Activated T-helper 2 cell treated with anti-CD3 and anti-CD28 coated beads, Interferon-gamma antibody, Interleukin-2, Interleukin-4, amounts not matched to agents 10 μg/mL and 5 μg/mL and 100 μg/mL, durations not matched to agents 14 hours and 24 hours and 36 hours (primary cell): ENCODE measurements at regions of chr15 and their contacts with region 1.

Region 1: GRCh38 chr15:44735482-44736180 is 697 bp upstream of the TRIM69 start:
- DNase-seq: no peak
- H3K4me3 Mint-ChIP-seq: peak overlapping the region; percentile 80
- H3K27ac Mint-ChIP-seq: peak overlapping the region; percentile 96
- H3K4me1 Mint-ChIP-seq: peaks cover 58% of the 10 kb centered on the region
- H3K27me3 Mint-ChIP-seq: no peaks in the 10 kb centered on the region

Region 2: GRCh38 chr15:44381236-44381635 is 354.4 kb before region 1 on chr15:
- intact Hi-C with region 1: no loop called
- DNase-seq: no peak
- H3K4me3 Mint-ChIP-seq: no peak overlapping the region
- H3K27ac Mint-ChIP-seq: no peak overlapping the region
- H3K4me1 Mint-ChIP-seq: peaks cover 12% of the 10 kb centered on the region
- H3K27me3 Mint-ChIP-seq: no peaks in the 10 kb centered on the region

Region 3: GRCh38 chr15:44593042-44593736 is 142.4 kb before region 1 on chr15:
- intact Hi-C with region 1: loop called (anchors 2 kb)
- DNase-seq: no peak
- H3K4me3 Mint-ChIP-seq: no peak overlapping the region
- H3K27ac Mint-ChIP-seq: peak overlapping the region; percentile 46
- H3K4me1 Mint-ChIP-seq: peaks cover 17% of the 10 kb centered on the region
- H3K27me3 Mint-ChIP-seq: no peaks in the 10 kb centered on the region

Region 4: GRCh38 chr15:44663409-44664308 is 72.0 kb before region 1 on chr15 and contains the start of gene SPG11:
- intact Hi-C with region 1: loop called (anchors 2 kb)
- DNase-seq: peak; percentile 96
- H3K4me3 Mint-ChIP-seq: peak within 1 kb of the TSS; percentile 90
- H3K27ac Mint-ChIP-seq: peak within 1 kb of the TSS; percentile 98
- H3K4me1 Mint-ChIP-seq: peaks cover 49% of the 10 kb centered on the region
- H3K27me3 Mint-ChIP-seq: no peaks in the 10 kb centered on the region
- total RNA-seq, gene SPG11: 71.2 and 75.8 TPM in 2 replicates

Region 5: GRCh38 chr15:44694416-44694815 is 41.2 kb before region 1 on chr15:
- intact Hi-C with region 1: no loop called
- DNase-seq: no peak
- H3K4me3 Mint-ChIP-seq: no peak overlapping the region
- H3K27ac Mint-ChIP-seq: no peak overlapping the region
- H3K4me1 Mint-ChIP-seq: peaks cover 11% of the 10 kb centered on the region
- H3K27me3 Mint-ChIP-seq: peaks cover 10% of the 10 kb centered on the region

Region 6: DNA sequence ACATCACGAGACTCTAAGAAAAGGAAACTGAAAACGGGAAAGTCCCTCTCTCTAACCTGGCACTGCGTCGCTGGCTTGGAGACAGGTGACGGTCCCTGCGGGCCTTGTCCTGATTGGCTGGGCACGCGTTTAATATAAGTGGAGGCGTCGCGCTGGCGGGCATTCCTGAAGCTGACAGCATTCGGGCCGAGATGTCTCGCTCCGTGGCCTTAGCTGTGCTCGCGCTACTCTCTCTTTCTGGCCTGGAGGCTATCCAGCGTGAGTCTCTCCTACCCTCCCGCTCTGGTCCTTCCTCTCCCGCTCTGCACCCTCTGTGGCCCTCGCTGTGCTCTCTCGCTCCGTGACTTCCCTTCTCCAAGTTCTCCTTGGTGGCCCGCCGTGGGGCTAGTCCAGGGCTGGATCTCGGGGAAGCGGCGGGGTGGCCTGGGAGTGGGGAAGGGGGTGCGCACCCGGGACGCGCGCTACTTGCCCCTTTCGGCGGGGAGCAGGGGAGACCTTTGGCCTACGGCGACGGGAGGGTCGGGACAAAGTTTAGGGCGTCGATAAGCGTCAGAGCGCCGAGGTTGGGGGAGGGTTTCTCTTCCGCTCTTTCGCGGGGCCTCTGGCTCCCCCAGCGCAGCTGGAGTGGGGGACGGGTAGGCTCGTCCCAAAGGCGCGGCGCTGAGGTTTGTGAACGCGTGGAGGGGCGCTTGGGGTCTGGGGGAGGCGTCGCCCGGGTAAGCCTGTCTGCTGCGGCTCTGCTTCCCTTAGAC is 24.1 kb before region 1 on chr15 and contains the start of gene B2M:
- intact Hi-C with region 1: loop called (anchors 2 kb)
- DNase-seq: peak; percentile 95
- H3K4me3 Mint-ChIP-seq: peak within 1 kb of the TSS; percentile 98
- H3K27ac Mint-ChIP-seq: peak within 1 kb of the TSS; percentile 99
- H3K4me1 Mint-ChIP-seq: peaks cover 44% of the 10 kb centered on the region
- H3K27me3 Mint-ChIP-seq: no peaks in the 10 kb centered on the region
- total RNA-seq, gene B2M: 4,961 and 5,148 TPM in 2 replicates

Region 7: DNA sequence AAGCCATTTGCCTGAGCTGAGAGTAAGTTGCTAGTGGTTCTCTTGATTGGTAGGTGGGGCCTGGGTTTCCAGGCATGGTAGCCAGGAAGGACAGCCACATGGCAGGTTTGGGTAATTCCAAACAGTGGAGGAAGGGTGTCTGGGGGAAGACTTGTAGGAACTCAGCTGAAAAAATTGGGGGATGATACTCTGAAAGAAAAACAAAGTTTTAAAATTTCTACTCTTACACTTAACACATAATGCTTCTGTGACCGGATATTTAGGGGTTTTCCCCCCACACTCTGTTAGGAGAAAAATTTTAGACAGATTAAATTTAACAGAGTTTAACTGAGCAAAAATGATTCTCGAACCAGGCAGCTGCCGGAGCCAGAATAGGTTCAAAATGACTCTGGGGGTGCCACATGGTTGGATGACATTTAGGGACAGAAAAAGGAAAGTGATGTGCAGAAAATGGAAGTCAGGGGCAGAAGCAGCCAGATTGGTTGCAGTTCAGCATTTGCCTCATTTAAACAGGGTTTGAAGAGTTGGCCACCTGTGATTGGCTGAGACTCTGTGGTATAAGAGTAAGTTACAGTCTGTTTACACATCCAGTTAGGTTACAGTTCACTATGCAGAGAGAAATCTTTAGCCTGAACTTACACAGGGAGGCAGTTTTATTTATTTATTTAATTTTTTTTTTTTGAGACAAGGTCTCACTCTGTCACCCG is 16.2 kb before region 1 on chr15:
- intact Hi-C with region 1: loop called (anchors 2 kb)
- DNase-seq: peak; percentile 64
- H3K4me3 Mint-ChIP-seq: peak overlapping the region; percentile 39
- H3K27ac Mint-ChIP-seq: peak overlapping the region; percentile 94
- H3K4me1 Mint-ChIP-seq: peaks cover 73% of the 10 kb centered on the region
- H3K27me3 Mint-ChIP-seq: no peaks in the 10 kb centered on the region

Region 8: GRCh38 chr15:44798826-44799225 is 63.2 kb after region 1 on chr15:
- intact Hi-C with region 1: no loop called
- DNase-seq: no peak
- H3K4me3 Mint-ChIP-seq: no peak overlapping the region
- H3K27ac Mint-ChIP-seq: no peak overlapping the region
- H3K4me1 Mint-ChIP-seq: peaks cover 9% of the 10 kb centered on the region
- H3K27me3 Mint-ChIP-seq: peaks cover 5% of the 10 kb centered on the region